K562 (cell line): ENCODE measurements at regions of chr16 and their contacts with region 1.

Region 1: GRCh38 chr16:2236337-2237101 is at the start of gene DNASE1L2:
- DNase-seq: no peak
- ATAC-seq: peak; percentile 7
- H3K4me3 ChIP-seq: no peak within 1 kb of the TSS
- H3K27ac ChIP-seq: no peak within 1 kb of the TSS
- H3K4me1 ChIP-seq: peaks cover 0 to 55% of the 10 kb centered on the region in 2 experiments; a peak in 2 of 5 replicates
- H3K27me3 ChIP-seq: no peaks in the 10 kb centered on the region
- CTCF ChIP-seq: no peak
- EP300 ChIP-seq: no peak
- POLR2A ChIP-seq: peak; percentile 42
- RAD21 ChIP-seq: no peak
- polyA plus RNA-seq, gene DNASE1L2: 0.08 TPM in 1 of 2 experiments, not detected in the other

Region 2: GRCh38 chr16:2223375-2224182 is 12.9 kb before region 1 on chr16 and contains the start of gene E4F1:
- CTCF ChIA-PET with region 1: no interaction called
- POLR2A ChIA-PET with region 1: interaction called, 29 read pairs
- in situ Hi-C with region 1: no loop called
- intact Hi-C with region 1: no loop called
- DNase-seq: peak; percentile 94 to 100 (median 96)
- ATAC-seq: peak; percentile 94
- H3K4me3 ChIP-seq: peak within 1 kb of the TSS; percentile 87
- H3K27ac ChIP-seq: peak within 1 kb of the TSS; percentile 82
- H3K4me1 ChIP-seq: peaks cover 11 to 58% of the 10 kb centered on the region in 2 experiments; a peak in 3 of 5 replicates
- H3K27me3 ChIP-seq: no peaks in the 10 kb centered on the region
- CTCF ChIP-seq: no peak
- EP300 ChIP-seq: 0 out of 2 replicates have a peak, but pooled peaks have one; percentile 6
- POLR2A ChIP-seq: peak; percentile 92
- RAD21 ChIP-seq: no peak
- polyA plus RNA-seq, gene E4F1: 0.48 to 0.96 TPM